Activated naive CD4-positive, alpha-beta T cell treated with anti-CD3 and anti-CD28 coated beads for 36 hours (primary cell): ENCODE measurements at regions of chr14 and their contacts with region 1.

Region 1: GRCh38 chr14:55094321-55095157 is 34.5 kb upstream of the LGALS3 start:
- DNase-seq: no peak
- H3K4me3 Mint-ChIP-seq: no peak overlapping the region
- H3K27ac Mint-ChIP-seq: no peak overlapping the region
- H3K4me1 Mint-ChIP-seq: peaks cover 17% of the 10 kb centered on the region
- H3K27me3 Mint-ChIP-seq: no peaks in the 10 kb centered on the region

Region 2: DNA sequence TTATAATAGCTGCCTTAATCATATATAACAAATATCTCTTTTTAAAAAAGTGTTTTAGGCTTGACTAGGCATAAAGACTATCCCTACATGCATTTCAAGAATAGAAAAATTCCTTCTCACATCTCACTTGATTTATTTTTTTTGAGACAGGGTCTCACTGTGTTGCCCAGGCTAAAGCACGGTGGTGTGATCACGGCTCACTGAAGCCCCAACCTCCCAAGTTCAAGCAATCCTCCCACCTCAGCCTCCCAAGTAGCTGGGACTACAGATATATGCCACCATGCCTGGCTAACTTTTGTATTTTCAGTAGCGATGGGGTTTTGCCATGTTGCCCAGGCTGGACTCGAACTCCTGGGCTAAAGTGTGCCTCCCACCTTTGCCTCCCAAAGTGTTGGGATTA is 127.0 kb before region 1 on chr14:
- CTCF ChIA-PET with region 1: no interaction called
- intact Hi-C with region 1: no loop called
- DNase-seq: no peak
- H3K4me3 Mint-ChIP-seq: no peak overlapping the region
- H3K27ac Mint-ChIP-seq: no peak overlapping the region
- H3K4me1 Mint-ChIP-seq: peaks cover 5% of the 10 kb centered on the region
- H3K27me3 Mint-ChIP-seq: no peaks in the 10 kb centered on the region

Region 3: DNA sequence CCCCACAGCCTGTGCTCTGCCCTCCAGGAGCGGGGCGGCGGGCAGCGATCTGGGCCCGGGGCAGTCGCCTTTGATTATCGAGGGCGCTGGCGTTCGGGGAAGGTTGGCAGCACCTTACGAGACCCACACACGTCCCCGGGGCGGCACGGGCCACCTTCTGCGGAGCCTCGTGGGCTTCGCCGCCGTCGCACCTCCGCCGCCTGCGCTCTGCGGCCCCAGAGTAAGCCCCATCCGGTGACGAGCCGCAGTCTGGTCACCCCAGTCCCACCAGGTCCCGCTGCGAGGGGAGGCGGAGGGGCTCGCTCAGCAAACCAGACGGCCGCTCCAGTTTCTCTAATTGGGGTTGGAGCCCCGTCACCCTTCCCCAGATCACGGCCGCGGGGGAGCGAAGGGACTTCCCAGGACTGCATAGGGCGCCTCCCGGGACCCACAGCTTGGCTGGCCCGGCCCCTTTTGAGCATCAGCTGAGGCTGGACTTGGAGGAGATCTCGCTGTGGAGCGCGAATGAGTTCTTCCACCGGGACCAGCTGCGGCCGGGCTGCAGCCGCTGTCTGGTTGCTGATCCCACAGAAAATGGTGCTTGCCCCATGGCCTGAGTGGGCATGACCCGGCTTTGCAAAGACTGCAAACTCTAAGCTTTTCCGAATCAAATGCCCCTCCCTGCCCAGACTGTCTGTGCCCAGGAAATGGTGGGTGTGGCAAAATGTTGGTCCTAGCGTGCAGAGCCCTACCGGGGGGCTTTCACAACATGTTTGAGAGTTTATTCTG is 35.1 kb after region 1 on chr14:
- CTCF ChIA-PET with region 1: interaction called, 11 read pairs
- intact Hi-C with region 1: loop called (anchors 1 kb)
- DNase-seq: peak; percentile 61
- H3K4me3 Mint-ChIP-seq: peak overlapping the region; percentile 61
- H3K27ac Mint-ChIP-seq: no peak overlapping the region
- H3K4me1 Mint-ChIP-seq: peaks cover 4% of the 10 kb centered on the region
- H3K27me3 Mint-ChIP-seq: peaks cover 37% of the 10 kb centered on the region

Region 4: GRCh38 chr14:55160989-55161388 is 66.5 kb after region 1 on chr14:
- CTCF ChIA-PET with region 1: interaction called, 43 read pairs
- intact Hi-C with region 1: loop called (anchors 1 kb)
- DNase-seq: no peak
- H3K4me3 Mint-ChIP-seq: no peak overlapping the region
- H3K27ac Mint-ChIP-seq: no peak overlapping the region
- H3K4me1 Mint-ChIP-seq: peaks cover 10% of the 10 kb centered on the region
- H3K27me3 Mint-ChIP-seq: no peaks in the 10 kb centered on the region

Region 5: DNA sequence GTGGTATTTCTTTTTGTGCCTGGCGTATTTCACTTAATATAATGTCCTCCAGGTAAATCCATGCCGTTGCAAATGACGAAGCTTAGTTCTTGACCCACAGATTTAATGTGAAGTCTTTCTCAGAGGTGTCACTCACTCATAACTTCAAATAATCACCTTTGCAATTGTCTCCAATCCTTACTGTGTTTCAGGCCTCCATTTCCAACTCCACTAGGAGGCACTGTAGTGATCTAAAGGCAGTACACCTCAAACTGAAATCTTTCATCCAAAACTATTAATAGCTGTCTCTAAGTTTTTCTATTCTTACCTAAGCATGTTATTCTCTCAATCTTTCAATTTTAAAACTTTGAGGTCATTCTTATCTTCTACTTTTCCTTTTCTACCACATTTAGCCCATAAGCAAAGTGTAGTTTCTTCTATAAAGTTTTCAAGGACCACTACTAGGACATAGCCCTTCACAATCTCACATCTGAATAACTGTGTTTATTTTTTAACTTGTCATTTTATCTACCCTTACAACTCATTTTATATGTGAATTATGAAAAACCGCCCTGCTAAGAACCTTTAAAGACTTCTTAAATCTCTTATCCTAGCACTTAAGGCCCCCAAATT is 151.2 kb after region 1 on chr14:
- CTCF ChIA-PET with region 1: no interaction called
- intact Hi-C with region 1: no loop called
- DNase-seq: peak; percentile 53
- H3K4me3 Mint-ChIP-seq: no peak overlapping the region
- H3K27ac Mint-ChIP-seq: no peak overlapping the region
- H3K4me1 Mint-ChIP-seq: peaks cover 2% of the 10 kb centered on the region
- H3K27me3 Mint-ChIP-seq: peaks cover 4% of the 10 kb centered on the region